Head of caudate nucleus (tissue), 42 donors: ENCODE measurements at regions of chr3 and their contacts with region 1.

Region 1: GRCh38 chr3:185585859-185586685 is at the start of gene SENP2:
- DNase-seq: peak; percentile 98 to 100 (median 100)

Region 2: GRCh38 chr3:185362850-185363661 is 223.0 kb before region 1 on chr3 and contains the start of gene MAP3K13:
- intact Hi-C with region 1: loop called (anchors 10 kb)
- DNase-seq: peak; percentile 56 to 94 (median 81)

Region 3: GRCh38 chr3:185498503-185499396 is 87.3 kb before region 1 on chr3 and contains the start of gene TMEM41A:
- intact Hi-C with region 1: loop called (anchors 1 kb)
- DNase-seq: peak; percentile 84 to 98 (median 94)

Region 4: GRCh38 chr3:185537369-185537970 is 48.6 kb before region 1 on chr3:
- intact Hi-C with region 1: no loop called
- DNase-seq: peak in 7 of 42 donors; percentile 9 to 44 (median 23)